ENCODE measurements at regions of chr19 and their contacts with region 1.

Region 1: DNA sequence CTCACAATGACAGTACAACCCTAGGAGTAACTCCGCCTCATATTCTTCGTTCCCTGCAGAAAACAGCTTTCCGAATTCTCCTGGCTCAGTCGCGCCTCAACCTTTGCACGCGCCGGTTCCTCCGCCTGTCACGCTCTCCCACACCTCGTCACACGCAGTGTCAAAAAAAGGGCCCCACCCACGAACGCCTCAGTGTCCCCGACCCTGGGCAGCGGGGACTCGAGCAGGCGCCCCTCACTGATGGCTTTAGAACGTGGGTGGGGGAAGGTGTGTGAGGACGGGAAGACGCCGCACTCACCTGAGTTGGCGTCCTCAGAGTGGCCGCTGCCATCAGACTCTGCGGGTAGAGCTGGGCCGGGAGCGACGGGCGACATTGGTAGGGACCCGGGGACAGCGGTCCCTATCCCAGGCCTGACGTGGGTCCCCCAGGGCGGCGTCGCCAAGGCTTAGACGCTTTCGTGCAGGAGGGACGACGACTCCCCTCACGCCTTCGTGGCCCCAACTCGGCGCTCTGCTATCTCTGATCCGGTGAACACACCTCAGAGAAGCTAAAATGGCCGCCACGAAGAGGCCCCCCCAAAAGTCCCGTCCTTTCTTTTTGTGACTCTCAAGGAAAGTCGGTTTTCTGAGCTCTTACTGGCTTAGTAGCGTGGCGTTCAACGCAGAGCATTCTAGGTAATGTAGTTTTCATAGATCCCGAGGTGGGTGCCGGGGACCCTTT is at the start of gene ZNF154:
- DNase-seq: peak; percentile 76
- ATAC-seq: peak; percentile 94
- H3K4me3 Mint-ChIP-seq: peak within 1 kb of the TSS; percentile 79
- H3K27ac Mint-ChIP-seq: peak within 1 kb of the TSS; percentile 87
- H3K4me1 Mint-ChIP-seq: peaks cover 26% of the 10 kb centered on the region
- H3K27me3 Mint-ChIP-seq: no peaks in the 10 kb centered on the region
- total RNA-seq, gene ZNF154: 4.4 to 5.0 TPM

Region 2: DNA sequence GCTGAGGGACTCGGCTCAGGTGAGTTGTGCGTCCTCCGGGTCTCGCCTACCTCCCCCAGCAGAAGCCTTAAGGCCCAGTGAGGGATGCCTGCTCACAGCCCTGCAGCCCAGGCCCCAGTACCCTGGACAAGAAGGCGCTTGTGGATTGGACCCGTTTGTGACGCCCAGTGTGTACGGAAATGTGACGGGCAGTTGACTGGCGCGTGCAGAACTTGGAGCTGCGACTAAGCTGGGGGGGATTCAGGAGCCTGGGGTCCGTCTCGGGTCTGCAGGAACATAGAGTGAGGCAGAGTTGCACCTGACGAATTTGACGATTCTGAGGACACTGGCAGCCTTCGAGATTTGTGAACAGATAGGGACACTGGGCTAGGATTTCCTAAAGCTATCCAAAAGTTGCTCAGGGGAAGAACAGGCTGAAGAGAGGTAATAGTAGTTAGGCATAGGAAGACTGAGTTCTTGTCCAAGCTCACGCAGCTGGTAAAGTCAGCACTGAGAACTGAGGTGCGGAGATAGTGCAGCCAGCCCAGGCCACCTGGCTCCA is 26.5 kb before region 1 on chr19:
- CTCF ChIA-PET with region 1: interaction called, 4 read pairs
- POLR2A ChIA-PET with region 1: interaction called, 7 read pairs
- intact Hi-C with region 1: loop called in 1 of 2 experiments (anchors 2 kb)
- DNase-seq: no peak
- ATAC-seq: no peak
- H3K4me3 Mint-ChIP-seq: peak overlapping the region; percentile 85
- H3K27ac Mint-ChIP-seq: peak overlapping the region; percentile 93
- H3K4me1 Mint-ChIP-seq: peaks cover 31% of the 10 kb centered on the region
- H3K27me3 Mint-ChIP-seq: peaks cover under 1% of the 10 kb centered on the region

Region 3: GRCh38 chr19:57900311-57900710 is 191.5 kb after region 1 on chr19:
- CTCF ChIA-PET with region 1: no interaction called
- POLR2A ChIA-PET with region 1: no interaction called
- intact Hi-C with region 1: no loop called
- DNase-seq: no peak
- ATAC-seq: no peak
- H3K4me3 Mint-ChIP-seq: no peak overlapping the region
- H3K27ac Mint-ChIP-seq: no peak overlapping the region
- H3K4me1 Mint-ChIP-seq: peaks cover 12% of the 10 kb centered on the region
- H3K27me3 Mint-ChIP-seq: no peaks in the 10 kb centered on the region

Region 4: DNA sequence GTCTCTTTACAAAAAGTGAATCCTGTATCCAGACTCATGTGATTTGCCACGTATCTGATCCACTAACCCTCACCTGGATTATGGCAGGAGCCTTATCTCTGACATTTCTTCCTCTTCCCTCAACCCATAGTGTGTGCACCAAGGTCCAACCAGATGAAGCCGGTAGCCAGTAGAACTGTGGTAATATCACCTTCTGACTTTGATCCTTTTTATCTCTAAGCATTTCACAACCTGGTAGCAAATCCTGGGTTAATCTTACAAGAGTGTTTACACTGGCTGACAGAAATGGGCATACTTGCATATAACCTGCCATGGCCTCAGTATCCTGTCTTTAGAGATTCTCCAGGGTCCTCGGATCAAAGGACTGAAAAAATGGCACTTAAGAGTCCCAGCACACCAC is 205.7 kb after region 1 on chr19:
- CTCF ChIA-PET with region 1: no interaction called
- POLR2A ChIA-PET with region 1: no interaction called
- intact Hi-C with region 1: no loop called
- DNase-seq: no peak
- ATAC-seq: no peak
- H3K4me3 Mint-ChIP-seq: no peak overlapping the region
- H3K27ac Mint-ChIP-seq: no peak overlapping the region
- H3K4me1 Mint-ChIP-seq: peaks cover 27% of the 10 kb centered on the region
- H3K27me3 Mint-ChIP-seq: no peaks in the 10 kb centered on the region